Heart left ventricle (tissue), 16 donors: ENCODE measurements at regions of chr12 and their contacts with region 1.

Region 1: GRCh38 chr12:2583091-2583497 is 211.7 kb upstream of the FKBP4 start:
- DNase-seq: peak; percentile 63 to 89 (median 70)
- ATAC-seq: peak; percentile 65 to 89 (median 84)
- H3K4me3 ChIP-seq: peak overlapping the region in 5 of 12 donors; percentile 4 to 20 (median 11)
- H3K27ac ChIP-seq: peak overlapping the region in 7 of 12 donors; percentile 24 to 76 (median 48)
- H3K4me1 ChIP-seq: peaks cover 0 to 18% (median 11%) of the 10 kb centered on the region in 12 donors
- H3K27me3 ChIP-seq: peaks cover 0 to 6% (median 0%) of the 10 kb centered on the region in 9 donors
- CTCF ChIP-seq: peak; percentile 80 to 96 (median 91)
- POLR2A ChIP-seq: no peak

Region 2: DNA sequence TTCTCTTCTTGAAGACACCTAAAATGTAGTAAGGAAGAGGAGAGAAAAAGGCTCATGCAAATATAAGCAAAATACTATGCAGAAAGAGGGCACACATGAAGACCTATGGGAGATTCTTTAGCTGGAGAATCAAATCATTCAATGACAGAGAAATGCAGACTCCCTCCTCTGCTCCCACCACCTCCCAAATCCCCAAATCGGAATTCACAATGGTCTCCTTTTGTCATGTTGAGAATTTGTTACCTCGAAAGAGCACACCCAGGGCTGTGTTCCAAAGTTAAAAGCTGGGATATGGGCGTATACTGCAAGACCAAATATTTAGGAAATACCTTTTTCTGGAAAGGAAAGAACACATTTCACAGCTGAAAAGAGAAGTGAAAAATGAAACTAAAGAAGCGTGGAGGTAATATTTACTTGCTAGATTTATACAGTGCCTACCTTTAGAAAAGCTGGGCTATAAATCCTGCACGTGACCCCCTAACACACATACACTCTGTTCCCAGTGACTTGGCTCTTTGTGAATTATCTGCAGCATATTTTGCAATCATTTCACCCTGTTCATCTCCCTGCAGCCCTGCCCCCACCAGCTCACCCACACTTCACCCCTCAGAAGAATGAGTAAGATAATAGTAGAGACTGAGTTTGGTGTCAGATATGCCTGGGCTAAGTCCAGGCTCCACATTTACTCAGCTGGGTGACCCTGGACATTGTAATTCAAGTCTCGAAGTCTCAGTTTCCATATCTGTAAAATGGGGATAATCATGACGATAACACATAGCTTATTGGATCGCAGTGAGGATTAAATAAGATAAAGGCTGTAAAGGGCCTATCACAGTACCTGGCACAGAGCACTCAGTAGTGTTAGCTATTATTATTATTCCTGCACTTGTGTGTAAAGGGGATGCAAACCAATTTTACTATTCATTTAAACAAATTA is 533.2 kb before region 1 on chr12:
- intact Hi-C with region 1: loop called in 7 of 10 experiments (anchors 1 to 10 kb)
- DNase-seq: no peak
- ATAC-seq: no peak
- H3K4me3 ChIP-seq: no peak overlapping the region
- H3K27ac ChIP-seq: no peak overlapping the region
- H3K4me1 ChIP-seq: peaks cover 0 to 34% (median 14%) of the 10 kb centered on the region in 12 donors
- H3K27me3 ChIP-seq: peaks cover 0 to 43% (median 0%) of the 10 kb centered on the region in 9 donors
- CTCF ChIP-seq: no peak
- POLR2A ChIP-seq: no peak

Region 3: DNA sequence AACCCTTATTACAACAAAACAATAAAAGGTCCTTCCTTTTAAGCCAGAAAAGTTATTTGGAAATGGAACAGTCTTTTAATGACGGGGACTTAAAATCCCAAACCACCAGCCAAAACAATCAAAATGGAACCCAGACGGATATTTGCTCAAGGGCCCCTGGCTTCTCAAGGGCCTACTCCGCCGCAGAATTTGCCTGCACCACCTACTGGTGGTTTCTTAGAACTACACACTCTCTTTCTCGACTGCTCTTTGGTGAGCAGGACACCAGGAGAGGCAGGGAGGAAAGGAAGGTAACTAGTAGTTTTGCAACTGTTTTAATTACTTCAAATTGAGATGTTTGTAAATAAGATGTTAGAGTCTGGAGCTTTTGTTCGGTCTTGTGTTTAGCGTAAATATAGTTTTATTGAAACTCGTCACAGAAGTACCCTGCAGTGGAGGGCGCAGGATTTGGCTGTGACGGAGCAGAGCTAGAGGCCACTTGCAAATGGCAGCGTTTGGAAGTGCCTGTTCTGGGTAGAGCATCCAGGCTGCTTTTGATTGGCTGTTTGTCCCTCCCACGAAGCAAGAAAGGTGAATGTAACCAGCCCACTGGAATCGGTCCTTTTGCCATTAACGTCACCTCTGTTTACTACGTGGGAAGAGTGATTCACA is 291.8 kb before region 1 on chr12:
- intact Hi-C with region 1: loop called in 2 of 10 experiments (anchors 5 to 10 kb)
- DNase-seq: no peak
- ATAC-seq: no peak
- H3K4me3 ChIP-seq: no peak overlapping the region
- H3K27ac ChIP-seq: peak overlapping the region in 7 of 12 donors; percentile 8 to 82 (median 63)
- H3K4me1 ChIP-seq: peaks cover 3 to 99% (median 79%) of the 10 kb centered on the region in 12 donors
- H3K27me3 ChIP-seq: no peaks in the 10 kb centered on the region
- CTCF ChIP-seq: peak; percentile 54 to 76 (median 68)
- POLR2A ChIP-seq: no peak

Region 4: DNA sequence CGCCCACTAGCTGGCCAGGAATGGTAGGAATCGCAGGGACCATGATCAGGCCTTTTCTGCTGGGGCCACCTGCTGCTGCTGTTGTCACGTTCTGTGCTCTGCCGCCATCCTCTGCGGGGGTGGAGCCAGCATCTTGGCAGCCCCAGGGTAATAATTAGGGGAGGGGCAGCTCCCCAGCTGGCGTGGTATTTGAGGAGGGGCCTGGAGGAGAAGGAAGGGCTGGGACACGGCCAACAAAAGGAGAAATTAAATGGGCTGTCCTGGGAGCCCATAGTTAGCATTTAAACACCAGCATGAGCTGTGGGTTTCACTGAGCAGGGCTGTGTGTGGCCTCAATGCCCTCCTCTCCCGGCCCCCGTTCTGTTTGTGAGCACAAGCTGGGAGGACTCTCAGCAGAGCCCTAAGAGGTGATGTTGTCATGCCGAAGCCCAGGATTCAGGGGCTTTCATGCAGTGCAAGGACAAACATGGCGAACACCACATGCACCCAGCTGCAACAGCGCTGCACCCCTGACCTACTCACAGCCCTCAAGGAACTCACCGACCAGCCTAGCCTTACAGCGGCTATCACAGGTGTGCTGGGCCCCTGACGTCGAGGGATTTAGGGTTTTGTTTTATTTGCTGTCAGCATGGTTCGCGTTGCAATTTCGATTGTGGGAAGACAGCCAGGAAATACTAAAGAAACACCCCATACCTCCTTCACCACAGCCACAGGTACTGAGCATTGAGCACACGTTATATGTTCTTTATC is 206.0 kb before region 1 on chr12:
- intact Hi-C with region 1: loop called in 7 of 10 experiments (anchors 5 to 10 kb)
- DNase-seq: no peak
- ATAC-seq: no peak
- H3K4me3 ChIP-seq: no peak overlapping the region
- H3K27ac ChIP-seq: peak overlapping the region in 1 of 12 donors; percentile 78
- H3K4me1 ChIP-seq: peaks cover 0 to 95% (median 67%) of the 10 kb centered on the region in 12 donors
- H3K27me3 ChIP-seq: no peaks in the 10 kb centered on the region
- CTCF ChIP-seq: no peak
- POLR2A ChIP-seq: no peak

Region 5: DNA sequence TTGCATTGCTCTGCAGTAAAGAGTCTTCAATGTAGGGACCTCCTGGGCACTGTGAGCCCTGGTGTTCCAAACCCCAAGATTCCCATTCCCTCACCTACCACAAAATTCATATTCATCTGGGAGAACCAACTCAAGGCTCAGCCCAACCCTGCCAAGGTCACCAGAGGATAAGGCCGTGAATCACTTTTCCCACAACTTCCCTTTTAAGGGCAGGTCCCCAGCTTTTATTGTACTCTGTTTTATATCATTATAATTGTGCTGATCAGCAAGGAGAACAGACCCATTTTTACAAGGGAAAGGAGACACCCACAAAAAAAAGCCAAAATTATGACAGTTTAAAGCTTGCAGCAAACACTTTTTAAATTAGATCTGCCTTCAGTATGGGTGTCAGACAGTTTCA is 151.3 kb before region 1 on chr12:
- intact Hi-C with region 1: no loop called
- DNase-seq: peak in 1 of 5 donors; percentile 29
- ATAC-seq: peak in 2 of 4 donors; percentile 35 to 38
- H3K4me3 ChIP-seq: no peak overlapping the region
- H3K27ac ChIP-seq: peak overlapping the region in 11 of 12 donors; percentile 11 to 83 (median 32)
- H3K4me1 ChIP-seq: peaks cover 0 to 65% (median 26%) of the 10 kb centered on the region in 12 donors
- H3K27me3 ChIP-seq: no peaks in the 10 kb centered on the region
- CTCF ChIP-seq: no peak
- POLR2A ChIP-seq: no peak

Region 6: GRCh38 chr12:2451025-2451424 is 132.1 kb before region 1 on chr12:
- intact Hi-C with region 1: loop called in 2 of 10 experiments (anchors 5 kb)
- DNase-seq: no peak
- ATAC-seq: no peak
- H3K4me3 ChIP-seq: peak overlapping the region in 1 of 12 donors; percentile 36
- H3K27ac ChIP-seq: peak overlapping the region in 6 of 12 donors; percentile 19 to 67 (median 40)
- H3K4me1 ChIP-seq: peaks cover 0 to 35% (median 13%) of the 10 kb centered on the region in 12 donors
- H3K27me3 ChIP-seq: no peaks in the 10 kb centered on the region
- CTCF ChIP-seq: no peak
- POLR2A ChIP-seq: no peak

Region 7: GRCh38 chr12:2482938-2483660 is 100.0 kb before region 1 on chr12:
- intact Hi-C with region 1: no loop called
- DNase-seq: no peak
- ATAC-seq: no peak
- H3K4me3 ChIP-seq: no peak overlapping the region
- H3K27ac ChIP-seq: peak overlapping the region in 2 of 12 donors; percentile 6 to 18
- H3K4me1 ChIP-seq: peaks cover 0 to 36% (median 9%) of the 10 kb centered on the region in 12 donors
- H3K27me3 ChIP-seq: no peaks in the 10 kb centered on the region
- CTCF ChIP-seq: no peak
- POLR2A ChIP-seq: no peak